ENCODE measurements at regions of chr3 and their contacts with region 1.

Region 1: DNA sequence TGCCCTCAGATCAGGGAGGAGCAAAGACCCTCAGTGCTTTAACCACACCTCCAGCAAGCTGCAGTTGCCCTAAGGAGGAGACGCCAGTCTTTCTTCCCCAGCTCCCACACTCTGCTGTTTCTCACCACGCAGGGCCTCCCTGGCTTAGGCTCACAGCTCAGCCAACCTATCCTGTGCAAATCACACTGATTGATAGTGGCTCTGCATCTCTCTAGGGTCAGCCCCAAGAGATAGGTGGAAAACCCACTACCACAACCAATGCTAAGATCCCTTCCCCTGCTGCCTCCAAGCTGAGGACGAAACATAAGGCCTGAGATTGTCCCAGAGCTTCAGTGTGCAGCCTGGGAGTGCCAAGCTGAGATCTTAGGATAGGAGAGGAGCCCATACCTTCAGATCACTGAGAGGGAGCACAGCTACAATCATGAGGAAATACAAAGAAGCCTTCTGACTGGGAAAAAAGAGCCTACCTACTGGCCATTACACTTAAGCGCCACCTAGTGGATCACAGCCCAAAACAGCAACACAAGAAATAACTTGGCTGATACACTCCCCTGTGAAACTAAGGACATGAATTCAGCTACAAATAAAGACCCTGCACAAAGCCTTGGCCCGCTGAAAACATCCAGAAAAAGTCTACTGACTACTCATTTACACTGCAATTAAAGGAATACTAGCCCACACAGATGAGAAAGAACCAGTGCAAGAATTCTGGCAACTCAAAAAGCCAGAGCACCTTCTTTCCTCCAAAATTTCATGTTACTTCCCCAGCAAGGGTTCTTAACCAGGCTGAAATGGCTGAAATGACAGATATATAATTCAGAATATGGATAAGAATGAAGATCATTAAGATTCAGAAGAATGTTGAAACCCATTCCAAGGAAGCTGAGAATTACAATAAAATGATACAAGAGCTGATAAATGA is 271.5 kb upstream of the DCBLD2 start:
- DNase-seq: peak; percentile 80
- H3K4me3 ChIP-seq: no peak overlapping the region
- H3K27ac ChIP-seq: no peak overlapping the region
- H3K4me1 ChIP-seq: no peaks in the 10 kb centered on the region
- CTCF ChIP-seq: peak; percentile 92

Region 2: GRCh38 chr3:98602078-98602678 is 570.8 kb before region 1 on chr3:
- CTCF ChIA-PET with region 1: no interaction called
- POLR2A ChIA-PET with region 1: no interaction called
- intact Hi-C with region 1: loop called (anchors 10 kb)
- DNase-seq: peak; percentile 59
- H3K4me3 ChIP-seq: no peak overlapping the region
- H3K27ac ChIP-seq: no peak overlapping the region
- H3K4me1 ChIP-seq: no peaks in the 10 kb centered on the region
- CTCF ChIP-seq: peak; percentile 93

Region 3: DNA sequence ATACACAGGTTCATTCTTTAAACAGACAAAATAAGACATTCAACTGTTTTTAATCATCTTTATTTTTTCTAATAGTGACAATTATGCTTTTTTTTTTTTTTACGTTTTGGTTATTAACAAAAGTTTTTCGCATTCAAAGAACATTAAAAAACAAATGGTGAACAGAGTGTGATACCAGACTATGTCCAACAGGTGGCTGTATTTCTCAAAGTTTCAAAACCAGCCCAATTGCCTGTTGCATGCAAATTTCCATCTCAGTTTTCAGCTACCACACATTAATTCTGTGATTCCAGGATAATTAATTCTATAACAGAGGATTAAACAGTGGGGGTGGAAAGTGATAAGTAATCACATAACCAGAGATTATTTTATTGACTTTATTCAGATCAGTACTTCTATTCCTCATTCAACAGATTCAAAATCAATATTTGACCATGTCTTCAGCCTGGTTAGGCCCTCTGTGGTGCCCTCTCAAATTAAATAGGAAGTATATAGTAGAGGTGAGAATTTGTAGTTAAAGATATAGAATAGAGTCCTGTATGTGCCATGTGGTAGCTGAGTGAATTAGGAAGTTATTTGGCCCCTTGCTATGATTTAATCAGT is 149.3 kb before region 1 on chr3:
- CTCF ChIA-PET with region 1: no interaction called
- POLR2A ChIA-PET with region 1: no interaction called
- intact Hi-C with region 1: loop called (anchors 1 kb)
- DNase-seq: peak; percentile 64
- H3K4me3 ChIP-seq: no peak overlapping the region
- H3K27ac ChIP-seq: no peak overlapping the region
- H3K4me1 ChIP-seq: no peaks in the 10 kb centered on the region
- CTCF ChIP-seq: peak; percentile 92

Region 4: DNA sequence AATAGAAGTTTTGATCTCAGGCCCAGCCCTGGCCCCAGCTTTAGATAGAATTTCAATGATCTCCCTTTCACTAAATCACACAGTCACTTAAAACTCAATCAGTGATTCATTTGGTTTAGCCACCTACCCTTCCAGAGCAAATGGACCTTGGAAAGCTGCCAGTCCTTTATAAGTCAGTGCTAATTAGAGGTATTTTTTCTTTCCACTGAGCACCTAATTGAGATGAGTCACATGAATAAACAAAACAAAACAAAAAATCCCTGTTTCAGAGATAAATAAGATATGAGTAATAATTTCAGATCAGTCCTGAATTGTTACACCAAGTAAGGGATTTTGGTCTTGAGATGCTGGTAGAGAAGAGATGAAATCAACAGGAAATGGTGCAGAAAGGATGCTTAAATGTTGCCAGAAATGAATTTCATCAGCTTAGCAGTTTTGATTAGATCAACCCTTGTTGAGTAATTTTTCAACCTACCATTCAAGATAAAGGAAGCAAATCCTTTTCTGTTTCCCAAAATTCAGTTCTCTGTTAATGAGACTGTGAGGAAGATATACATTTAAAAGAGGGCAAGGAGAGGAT is 113.4 kb after region 1 on chr3:
- CTCF ChIA-PET with region 1: no interaction called
- POLR2A ChIA-PET with region 1: no interaction called
- intact Hi-C with region 1: no loop called
- DNase-seq: no peak
- H3K4me3 ChIP-seq: no peak overlapping the region
- H3K27ac ChIP-seq: no peak overlapping the region
- H3K4me1 ChIP-seq: no peaks in the 10 kb centered on the region
- CTCF ChIP-seq: no peak

Region 5: DNA sequence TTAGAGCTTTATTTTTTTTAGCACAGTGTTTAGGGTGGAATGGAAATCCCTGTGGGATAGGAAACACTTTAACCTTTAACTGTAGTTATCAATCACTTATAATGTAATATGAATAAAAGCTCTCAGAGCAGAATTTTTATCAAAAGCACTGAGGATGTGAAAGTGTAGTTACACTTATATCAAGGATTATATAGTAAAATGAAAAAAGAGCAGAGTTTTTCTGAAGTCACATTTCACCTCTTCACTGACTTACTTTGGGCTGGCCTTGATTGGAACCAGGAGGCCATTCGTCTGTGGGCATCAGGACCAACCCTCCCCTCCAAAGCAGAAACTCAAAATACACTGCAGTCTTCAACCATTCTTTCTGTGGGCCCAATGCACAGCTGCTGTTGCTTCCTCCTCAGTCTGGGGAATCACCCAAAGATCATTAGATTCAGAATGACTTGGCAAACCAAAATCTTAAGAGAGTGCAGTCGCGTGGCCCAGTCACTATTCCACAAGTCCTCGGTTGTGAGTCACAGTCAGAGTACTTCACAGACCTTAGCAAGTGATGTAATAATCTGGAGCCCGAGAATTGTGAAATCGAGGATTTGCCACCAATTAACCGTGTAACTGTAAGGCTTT is 332.8 kb after region 1 on chr3:
- CTCF ChIA-PET with region 1: no interaction called
- POLR2A ChIA-PET with region 1: no interaction called
- intact Hi-C with region 1: no loop called
- DNase-seq: no peak
- H3K4me3 ChIP-seq: no peak overlapping the region
- H3K27ac ChIP-seq: no peak overlapping the region
- H3K4me1 ChIP-seq: no peaks in the 10 kb centered on the region
- CTCF ChIP-seq: no peak